ENCODE measurements at regions of chr6 and their contacts with region 1.

Region 1: GRCh38 chr6:87731818-87732661 is 30.0 kb upstream of the AKIRIN2 start:
- DNase-seq: peak; percentile 67
- ATAC-seq: peak; percentile 78
- H3K4me3 Mint-ChIP-seq: no peak overlapping the region
- H3K27ac Mint-ChIP-seq: peak overlapping the region; percentile 75
- H3K4me1 Mint-ChIP-seq: peaks cover 32% of the 10 kb centered on the region
- H3K27me3 Mint-ChIP-seq: peaks cover 6% of the 10 kb centered on the region

Region 2: DNA sequence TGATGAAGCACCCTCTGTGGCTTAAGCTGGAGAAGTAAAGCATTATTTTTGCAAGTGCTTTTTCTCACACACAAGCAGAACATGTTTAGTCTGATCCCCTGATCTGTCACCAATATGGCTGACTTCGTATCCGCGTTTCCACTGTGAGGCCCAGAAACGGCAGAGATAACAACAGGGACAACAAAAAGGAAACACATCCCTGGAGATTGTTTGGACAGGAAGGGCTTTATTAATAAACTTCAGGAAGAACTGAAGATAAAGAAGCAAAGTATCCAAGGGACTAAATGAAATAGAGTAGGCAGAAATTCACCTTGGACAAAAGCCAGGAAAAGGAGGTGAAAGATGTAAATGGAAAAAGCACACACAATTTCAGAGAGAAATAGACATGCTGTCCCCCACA is 191.5 kb before region 1 on chr6:
- CTCF ChIA-PET with region 1: no interaction called
- POLR2A ChIA-PET with region 1: no interaction called
- intact Hi-C with region 1: no loop called
- DNase-seq: no peak
- ATAC-seq: no peak
- H3K4me3 Mint-ChIP-seq: no peak overlapping the region
- H3K27ac Mint-ChIP-seq: no peak overlapping the region
- H3K4me1 Mint-ChIP-seq: peaks cover 3% of the 10 kb centered on the region
- H3K27me3 Mint-ChIP-seq: no peaks in the 10 kb centered on the region

Region 3: GRCh38 chr6:87660226-87660911 is 71.7 kb before region 1 on chr6:
- CTCF ChIA-PET with region 1: no interaction called
- POLR2A ChIA-PET with region 1: interaction called, 11 read pairs
- intact Hi-C with region 1: no loop called
- DNase-seq: no peak
- ATAC-seq: no peak
- H3K4me3 Mint-ChIP-seq: no peak overlapping the region
- H3K27ac Mint-ChIP-seq: no peak overlapping the region
- H3K4me1 Mint-ChIP-seq: peaks cover 8% of the 10 kb centered on the region
- H3K27me3 Mint-ChIP-seq: no peaks in the 10 kb centered on the region

Region 4: DNA sequence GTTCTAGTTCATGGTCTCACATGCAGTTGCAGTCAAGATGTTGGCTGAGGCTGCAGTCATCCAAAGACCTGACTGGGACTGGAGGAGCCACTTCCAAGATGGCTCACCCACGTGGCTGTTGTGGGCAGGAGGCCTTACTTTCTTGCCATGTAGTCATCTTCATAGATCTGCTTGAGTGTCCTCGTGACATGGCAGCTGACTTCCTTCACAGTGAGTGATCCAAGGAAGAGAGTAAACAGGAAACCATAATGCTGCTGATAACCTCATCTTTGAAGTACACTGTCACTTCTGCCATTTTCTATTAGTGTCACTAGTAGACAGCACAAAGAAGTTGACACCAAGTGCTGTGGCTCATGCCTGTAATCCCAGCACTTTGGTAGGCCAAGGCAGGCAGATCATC is 10.1 kb after region 1 on chr6:
- CTCF ChIA-PET with region 1: interaction called, 5 read pairs
- POLR2A ChIA-PET with region 1: no interaction called
- intact Hi-C with region 1: loop called in 1 of 2 experiments (anchors 1 kb)
- DNase-seq: peak; percentile 85
- ATAC-seq: peak; percentile 88
- H3K4me3 Mint-ChIP-seq: no peak overlapping the region
- H3K27ac Mint-ChIP-seq: peak overlapping the region; percentile 76
- H3K4me1 Mint-ChIP-seq: peaks cover 31% of the 10 kb centered on the region
- H3K27me3 Mint-ChIP-seq: peaks cover 2% of the 10 kb centered on the region

Region 5: DNA sequence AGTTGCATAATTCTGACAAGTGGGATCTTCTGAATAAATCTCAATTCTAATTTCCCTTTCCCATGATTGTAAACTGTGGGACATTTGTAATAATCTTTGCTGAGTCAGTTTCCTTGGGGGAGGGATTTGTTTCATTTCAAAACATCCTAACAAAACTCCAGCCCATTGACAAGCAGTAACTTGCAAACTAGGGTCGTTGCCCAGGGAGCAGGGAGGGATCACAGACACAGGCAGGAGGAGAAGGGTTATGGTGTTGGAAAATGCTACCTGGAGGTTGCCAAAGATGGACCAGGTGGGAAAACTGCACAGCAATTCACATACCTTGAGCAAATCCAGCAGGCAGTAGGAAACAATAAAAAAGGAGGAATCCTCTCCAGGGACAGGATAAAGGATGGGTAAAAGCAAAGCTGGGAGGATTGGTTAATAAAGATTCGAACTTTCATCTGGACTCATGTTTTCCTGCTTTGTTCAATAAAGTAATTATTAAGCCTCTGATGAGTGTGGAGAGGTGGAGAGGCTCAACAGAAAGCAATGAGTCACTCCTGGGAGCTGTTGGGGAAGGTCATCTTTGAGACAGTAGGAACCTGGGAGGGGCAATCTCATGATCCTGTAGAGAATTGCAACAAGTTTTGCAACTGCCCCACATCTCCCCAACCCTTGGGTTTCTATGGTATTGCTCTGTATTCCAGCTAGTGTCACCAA is 57.3 kb after region 1 on chr6:
- CTCF ChIA-PET with region 1: no interaction called
- POLR2A ChIA-PET with region 1: no interaction called
- intact Hi-C with region 1: no loop called
- DNase-seq: no peak
- ATAC-seq: no peak
- H3K4me3 Mint-ChIP-seq: no peak overlapping the region
- H3K27ac Mint-ChIP-seq: no peak overlapping the region
- H3K4me1 Mint-ChIP-seq: peaks cover 2% of the 10 kb centered on the region
- H3K27me3 Mint-ChIP-seq: peaks cover 7% of the 10 kb centered on the region

Region 6: DNA sequence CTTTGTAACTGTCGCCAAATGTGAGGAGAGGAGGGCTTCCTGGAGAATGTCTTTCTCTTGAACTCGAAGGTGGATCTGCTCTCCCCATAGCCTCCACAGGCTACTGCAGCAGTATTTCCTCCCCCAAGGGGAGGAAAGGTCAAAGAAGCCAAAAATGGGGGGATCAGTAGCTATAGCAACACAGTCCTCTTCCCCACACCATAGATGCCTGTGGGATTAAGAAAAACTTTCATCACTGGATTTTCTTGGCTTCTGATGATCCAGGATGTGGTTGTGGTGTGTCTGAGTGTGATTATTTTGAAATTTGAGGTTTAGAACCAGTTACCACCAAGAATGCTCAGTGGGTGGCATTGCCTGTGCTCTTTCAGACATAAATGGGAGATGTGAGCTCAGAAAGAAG is 175.5 kb after region 1 on chr6:
- CTCF ChIA-PET with region 1: no interaction called
- POLR2A ChIA-PET with region 1: no interaction called
- intact Hi-C with region 1: loop called in 1 of 2 experiments (anchors 5 kb)
- DNase-seq: peak; percentile 27
- ATAC-seq: peak; percentile 73
- H3K4me3 Mint-ChIP-seq: no peak overlapping the region
- H3K27ac Mint-ChIP-seq: no peak overlapping the region
- H3K4me1 Mint-ChIP-seq: peaks cover 27% of the 10 kb centered on the region
- H3K27me3 Mint-ChIP-seq: peaks cover 4% of the 10 kb centered on the region

Measured in activated CD4-positive, alpha-beta T cell treated with anti-CD3 and anti-CD28 coated beads for 36 hours (primary cell).